Dorsolateral prefrontal cortex (tissue), 120 donors: ENCODE measurements at regions of chr10 and their contacts with region 1.

Region 1: DNA sequence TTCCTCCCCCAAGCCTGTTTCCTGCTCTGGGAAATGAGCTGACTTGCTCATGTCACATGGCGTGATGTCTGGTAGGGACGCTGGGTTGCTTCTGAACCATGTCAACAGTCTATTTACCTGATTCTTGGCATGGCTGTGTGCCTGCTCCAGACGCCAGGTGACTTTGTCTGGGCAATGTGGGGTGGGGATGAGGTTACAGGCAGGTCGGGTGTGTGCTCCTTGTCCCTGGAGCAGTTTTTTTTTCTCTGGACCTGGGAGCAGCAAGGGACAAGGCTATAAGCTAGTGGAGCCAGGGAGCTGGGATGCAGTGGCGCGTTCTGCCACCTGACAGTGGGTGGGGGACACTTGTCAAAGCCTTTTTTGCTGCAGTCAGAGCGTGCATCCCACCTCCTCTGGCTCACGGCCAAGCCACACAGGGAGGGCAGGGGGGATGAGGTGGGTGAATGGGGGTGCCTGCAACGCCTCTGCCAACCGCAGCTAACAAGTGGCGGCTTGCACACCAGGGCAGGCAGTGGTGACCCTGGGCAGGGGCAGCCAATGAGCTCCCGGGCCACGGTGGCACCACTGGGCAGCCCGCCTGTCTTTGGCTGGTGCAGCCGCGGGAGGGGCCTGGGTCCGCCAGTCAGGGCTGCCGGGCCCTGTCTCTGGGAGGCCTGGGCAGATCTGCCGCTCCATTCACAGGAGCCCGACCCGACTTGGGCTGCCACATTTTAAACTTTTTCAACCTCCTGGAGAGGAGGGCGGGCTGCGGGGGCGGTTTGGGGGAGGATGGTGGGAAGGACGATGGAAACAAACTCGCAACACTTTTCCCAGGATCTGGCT is 22.9 kb downstream of the DNAJB12 start:
- DNase-seq: peak; percentile 74 to 95 (median 92)
- H3K4me3 ChIP-seq: peak overlapping the region in 25 of 59 donors; percentile 0 to 39 (median 18)
- H3K27ac ChIP-seq: peak overlapping the region; percentile 76 to 99 (median 95)
- H3K27me3 ChIP-seq: no peaks in the 10 kb centered on the region
- CTCF ChIP-seq: peak in 45 of 56 donors; percentile 15 to 67 (median 42)

Region 2: DNA sequence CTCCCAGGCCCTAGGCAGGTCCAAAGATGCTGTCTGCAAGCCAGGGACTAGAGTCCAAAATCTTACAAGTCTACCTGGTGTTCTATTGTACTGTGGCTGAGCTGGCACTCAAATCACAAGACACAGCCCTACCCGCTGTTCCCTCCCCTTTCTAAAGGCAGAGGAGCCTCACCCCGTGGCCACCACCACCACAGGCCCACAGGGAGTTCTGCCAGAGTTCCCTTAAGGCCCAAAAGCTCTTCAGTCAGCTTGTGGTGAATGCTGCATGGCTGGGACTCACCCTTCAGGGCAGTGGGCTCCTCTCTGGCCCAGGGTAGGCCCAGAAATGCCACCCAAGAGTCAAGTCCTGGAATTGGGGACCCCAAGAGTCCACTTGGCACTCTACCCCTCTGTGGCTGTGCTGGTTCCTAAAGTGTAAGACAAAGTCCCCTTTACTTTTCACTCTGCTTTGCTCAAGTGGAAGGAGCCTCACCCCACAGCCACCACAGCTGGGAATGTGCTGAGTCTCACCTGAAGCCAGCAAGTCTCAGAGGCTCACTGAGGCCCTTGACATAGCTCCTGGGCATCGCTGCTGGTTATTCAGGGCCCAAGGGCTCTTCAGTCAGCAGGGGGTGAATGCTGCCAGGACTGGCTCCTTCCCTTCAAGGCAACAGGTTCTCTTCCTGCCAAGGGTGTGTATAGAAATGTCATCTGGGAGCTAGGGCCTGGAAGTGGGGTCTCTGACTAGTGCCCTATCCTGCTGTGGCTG is 432.0 kb before region 1 on chr10:
- intact Hi-C with region 1: loop called in 1 of 2 experiments (anchors 5 kb)
- DNase-seq: no peak
- H3K4me3 ChIP-seq: no peak overlapping the region
- H3K27ac ChIP-seq: no peak overlapping the region
- H3K27me3 ChIP-seq: no peaks in the 10 kb centered on the region
- CTCF ChIP-seq: no peak

Region 3: DNA sequence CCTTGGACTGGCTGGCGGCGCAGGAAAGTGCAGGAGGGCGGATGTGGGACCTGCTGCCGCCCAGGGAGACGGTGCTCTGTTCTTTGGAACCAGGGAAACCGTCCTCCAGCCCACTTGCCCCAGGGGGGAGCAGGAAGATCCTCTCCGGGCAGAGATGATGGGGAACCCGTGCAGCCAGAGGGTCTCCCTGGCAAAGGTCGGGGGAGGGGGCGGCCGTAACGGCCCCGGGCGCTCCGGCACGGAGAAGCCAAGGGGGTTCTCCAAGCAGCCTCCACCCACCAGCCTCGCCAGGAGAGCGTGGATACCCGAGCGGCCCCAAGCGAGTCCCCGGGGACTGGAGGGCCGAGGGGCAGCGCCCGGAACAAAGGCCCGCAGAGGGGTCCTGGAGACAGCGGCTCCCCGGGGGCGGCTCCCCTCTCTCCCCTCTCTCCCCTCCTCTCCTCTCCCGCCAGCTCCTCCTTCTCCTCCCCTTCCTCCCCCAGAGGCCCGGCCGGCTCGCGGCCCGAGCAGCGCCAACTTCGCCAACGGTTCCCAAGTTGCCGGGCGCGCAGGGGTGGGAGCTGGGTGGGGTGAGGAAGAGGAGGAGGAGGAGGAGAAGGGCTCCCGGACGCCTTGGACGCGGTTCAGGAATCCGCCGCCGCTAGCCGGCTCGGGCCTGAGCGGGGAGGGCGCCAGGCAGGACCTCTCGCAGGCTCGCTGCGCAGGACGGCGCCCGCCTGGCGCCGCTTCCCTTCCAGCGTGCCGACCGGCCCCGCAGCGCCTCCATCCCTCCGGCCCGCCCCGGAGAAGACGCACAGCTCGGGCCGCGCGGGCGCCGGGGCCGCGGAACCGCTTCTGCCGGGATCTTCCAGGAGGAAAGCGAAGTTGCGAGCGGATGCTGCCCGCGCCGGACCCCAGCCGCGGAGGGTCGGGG is 367.8 kb before region 1 on chr10 and contains the start of gene CHST3:
- intact Hi-C with region 1: loop called (anchors 5 to 10 kb)
- DNase-seq: peak in 5 of 10 donors; percentile 36 to 77 (median 73)
- H3K4me3 ChIP-seq: peak within 1 kb of the TSS; percentile 49 to 92 (median 78)
- H3K27ac ChIP-seq: peak within 1 kb of the TSS; percentile 72 to 100 (median 97)
- H3K27me3 ChIP-seq: peaks cover 0 to 12% (median 0%) of the 10 kb centered on the region in 45 donors
- CTCF ChIP-seq: peak in 10 of 56 donors; percentile 4 to 29 (median 14)
- total RNA-seq, gene CHST3: 7.0 to 62.9 (median 19.6) TPM

Region 4: DNA sequence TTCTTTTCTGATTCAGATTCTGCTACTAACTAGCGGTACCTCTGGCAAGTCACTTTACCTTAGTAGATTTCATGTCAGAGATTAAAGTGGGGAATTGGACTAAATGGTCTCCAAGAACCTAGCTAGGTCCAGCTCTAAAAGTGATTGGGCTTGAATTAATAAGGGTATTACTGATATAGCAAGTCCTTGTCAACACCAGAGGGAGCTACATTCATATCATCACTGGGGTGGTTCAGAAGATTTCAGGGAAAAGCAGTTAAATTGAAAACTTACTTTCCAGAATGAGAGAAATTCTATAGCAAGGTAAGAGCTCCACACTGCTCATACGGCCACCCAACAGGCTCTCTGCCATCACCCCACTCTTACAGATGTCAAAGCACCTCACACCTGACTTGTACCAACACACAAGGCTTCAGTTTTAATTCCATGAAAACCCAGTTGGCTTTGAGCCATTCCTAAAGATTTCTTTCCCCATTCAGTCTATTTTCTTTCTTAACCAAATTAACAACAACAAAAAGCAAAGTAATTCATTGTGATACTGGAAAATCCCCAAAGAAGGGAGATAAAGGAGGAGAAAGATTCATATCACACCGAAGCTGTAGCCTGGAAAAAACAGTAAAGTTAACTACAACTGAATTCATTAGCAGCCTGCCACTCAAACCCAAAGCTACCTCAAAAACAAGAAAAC is 205.5 kb before region 1 on chr10:
- intact Hi-C with region 1: loop called in 1 of 2 experiments (anchors 5 kb)
- DNase-seq: no peak
- H3K4me3 ChIP-seq: no peak overlapping the region
- H3K27ac ChIP-seq: peak overlapping the region in 35 of 59 donors; percentile 0 to 71 (median 38)
- H3K27me3 ChIP-seq: no peaks in the 10 kb centered on the region
- CTCF ChIP-seq: peak; percentile 16 to 71 (median 50)

Region 5: GRCh38 chr10:72254813-72255568 is 76.8 kb before region 1 on chr10:
- intact Hi-C with region 1: loop called in 1 of 2 experiments (anchors 5 kb)
- DNase-seq: peak; percentile 90 to 98 (median 95)
- H3K4me3 ChIP-seq: peak overlapping the region in 21 of 59 donors; percentile 2 to 43 (median 13)
- H3K27ac ChIP-seq: peak overlapping the region; percentile 92 to 100 (median 99)
- H3K27me3 ChIP-seq: no peaks in the 10 kb centered on the region
- CTCF ChIP-seq: peak in 34 of 56 donors; percentile 6 to 60 (median 26)

Region 6: GRCh38 chr10:72375585-72375984 is 43.8 kb after region 1 on chr10:
- intact Hi-C with region 1: no loop called
- DNase-seq: peak in 7 of 10 donors; percentile 37 to 70 (median 60)
- H3K4me3 ChIP-seq: no peak overlapping the region
- H3K27ac ChIP-seq: peak overlapping the region in 1 of 59 donors; percentile 13
- H3K27me3 ChIP-seq: no peaks in the 10 kb centered on the region
- CTCF ChIP-seq: peak in 51 of 56 donors; percentile 25 to 71 (median 50)